WTC11 (cell line): ENCODE measurements at regions of chr1 and their contacts with region 1.

Region 1: DNA sequence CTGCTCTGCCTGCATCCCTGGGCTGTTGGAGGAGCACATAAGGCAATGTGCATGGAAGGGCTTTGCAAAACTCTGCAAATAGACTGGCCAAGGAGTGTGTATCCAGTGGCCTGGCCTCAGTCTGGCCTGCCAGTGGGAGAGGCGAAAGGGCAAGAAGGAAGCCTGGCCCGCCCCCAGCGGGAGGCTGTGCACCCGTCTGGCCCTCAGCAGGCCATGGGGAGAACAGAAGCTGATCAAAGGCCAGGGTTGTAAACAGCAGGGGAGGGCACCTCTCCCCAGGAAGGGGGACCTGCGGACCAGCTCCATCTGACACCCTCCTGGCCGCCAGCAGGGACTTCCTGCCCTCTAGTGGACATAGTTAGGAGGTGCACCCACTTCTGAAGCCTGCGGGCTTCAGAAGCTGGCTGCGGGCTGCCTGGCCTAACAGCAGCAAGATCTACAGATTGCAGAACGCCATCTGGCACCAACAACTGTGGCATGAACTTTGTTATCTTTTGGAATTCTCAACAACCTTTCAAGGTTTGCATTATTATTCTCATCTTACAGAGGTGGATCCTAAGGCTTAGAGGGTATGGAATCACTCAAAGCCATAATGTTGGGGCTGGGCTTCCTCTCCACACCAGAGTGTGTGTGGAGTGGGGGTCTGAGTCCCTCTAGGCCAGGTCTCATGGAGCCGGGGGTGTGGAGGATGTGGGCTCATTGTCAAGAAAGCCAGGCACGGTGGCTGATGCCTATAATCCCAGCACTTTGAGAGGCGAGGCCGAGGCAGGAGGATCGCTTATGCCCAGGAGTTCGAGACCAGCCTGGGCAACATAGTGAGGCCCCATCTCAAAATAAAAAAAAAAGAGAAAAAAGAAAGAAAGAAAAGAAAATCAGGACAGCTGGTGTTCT is 18.9 kb upstream of the CDK18 start:
- DNase-seq: peak; percentile 81
- ATAC-seq: peak; percentile 75
- H3K4me3 Mint-ChIP-seq: no peak overlapping the region
- H3K27ac Mint-ChIP-seq: no peak overlapping the region
- H3K4me1 Mint-ChIP-seq: peaks cover 33% of the 10 kb centered on the region
- H3K27me3 Mint-ChIP-seq: peaks cover 28% of the 10 kb centered on the region
- CTCF ChIP-seq: peak; percentile 98

Region 2: DNA sequence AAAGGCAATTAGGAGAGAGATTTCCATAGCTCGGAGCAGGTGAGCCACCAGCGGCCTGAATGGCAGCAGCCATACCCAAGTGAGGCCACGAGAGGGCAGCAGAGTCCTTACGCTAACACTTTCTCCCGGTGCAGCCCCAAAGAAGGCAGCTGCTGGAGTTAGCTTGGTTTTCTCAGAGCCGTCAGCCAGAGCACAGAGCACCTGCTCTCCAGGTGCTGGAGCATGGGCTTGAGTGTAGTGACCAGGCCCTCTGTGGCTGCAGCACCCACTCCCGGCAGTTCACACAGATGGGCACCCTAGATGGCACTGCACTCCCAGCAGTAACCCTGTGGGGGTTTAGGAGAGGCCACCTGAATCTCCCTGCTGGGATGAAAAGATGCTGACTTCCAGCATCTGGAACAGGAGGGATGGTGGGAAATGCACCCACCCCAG is 212.0 kb before region 1 on chr1:
- CTCF ChIA-PET with region 1: interaction called, 18 read pairs
- POLR2A ChIA-PET with region 1: no interaction called
- DNase-seq: peak; percentile 95
- ATAC-seq: peak; percentile 78
- H3K4me3 Mint-ChIP-seq: no peak overlapping the region
- H3K27ac Mint-ChIP-seq: peak overlapping the region; percentile 83
- H3K4me1 Mint-ChIP-seq: peaks cover 17% of the 10 kb centered on the region
- H3K27me3 Mint-ChIP-seq: no peaks in the 10 kb centered on the region
- CTCF ChIP-seq: peak; percentile 97

Region 3: GRCh38 chr1:205375835-205376545 is 109.6 kb before region 1 on chr1:
- CTCF ChIA-PET with region 1: interaction called, 13 read pairs
- POLR2A ChIA-PET with region 1: no interaction called
- DNase-seq: peak; percentile 30
- ATAC-seq: peak; percentile 90
- H3K4me3 Mint-ChIP-seq: peak overlapping the region; percentile 52
- H3K27ac Mint-ChIP-seq: peak overlapping the region; percentile 80
- H3K4me1 Mint-ChIP-seq: peaks cover 46% of the 10 kb centered on the region
- H3K27me3 Mint-ChIP-seq: no peaks in the 10 kb centered on the region
- CTCF ChIP-seq: no peak

Region 4: GRCh38 chr1:205422993-205423625 is 62.5 kb before region 1 on chr1:
- CTCF ChIA-PET with region 1: interaction called, 89 read pairs
- POLR2A ChIA-PET with region 1: interaction called, 3 read pairs
- DNase-seq: no peak
- ATAC-seq: no peak
- H3K4me3 Mint-ChIP-seq: no peak overlapping the region
- H3K27ac Mint-ChIP-seq: no peak overlapping the region
- H3K4me1 Mint-ChIP-seq: peaks cover 42% of the 10 kb centered on the region
- H3K27me3 Mint-ChIP-seq: peaks cover 37% of the 10 kb centered on the region
- CTCF ChIP-seq: no peak

Region 5: GRCh38 chr1:205458777-205459566 is 26.6 kb before region 1 on chr1:
- CTCF ChIA-PET with region 1: interaction called, 143 read pairs
- POLR2A ChIA-PET with region 1: interaction called, 13 read pairs
- DNase-seq: peak; percentile 79
- ATAC-seq: peak; percentile 16; the same call in 1 of the 2 replicates
- H3K4me3 Mint-ChIP-seq: no peak overlapping the region
- H3K27ac Mint-ChIP-seq: no peak overlapping the region
- H3K4me1 Mint-ChIP-seq: peaks cover 23% of the 10 kb centered on the region
- H3K27me3 Mint-ChIP-seq: peaks cover 4% of the 10 kb centered on the region
- CTCF ChIP-seq: no peak

Region 6: GRCh38 chr1:205528887-205529825 is 43.6 kb after region 1 on chr1:
- CTCF ChIA-PET with region 1: interaction called, 613 read pairs
- POLR2A ChIA-PET with region 1: interaction called, 8 read pairs
- DNase-seq: peak; percentile 94
- ATAC-seq: peak; percentile 84
- H3K4me3 Mint-ChIP-seq: no peak overlapping the region
- H3K27ac Mint-ChIP-seq: no peak overlapping the region
- H3K4me1 Mint-ChIP-seq: peaks cover 16% of the 10 kb centered on the region
- H3K27me3 Mint-ChIP-seq: no peaks in the 10 kb centered on the region
- CTCF ChIP-seq: peak; percentile 95

Region 7: DNA sequence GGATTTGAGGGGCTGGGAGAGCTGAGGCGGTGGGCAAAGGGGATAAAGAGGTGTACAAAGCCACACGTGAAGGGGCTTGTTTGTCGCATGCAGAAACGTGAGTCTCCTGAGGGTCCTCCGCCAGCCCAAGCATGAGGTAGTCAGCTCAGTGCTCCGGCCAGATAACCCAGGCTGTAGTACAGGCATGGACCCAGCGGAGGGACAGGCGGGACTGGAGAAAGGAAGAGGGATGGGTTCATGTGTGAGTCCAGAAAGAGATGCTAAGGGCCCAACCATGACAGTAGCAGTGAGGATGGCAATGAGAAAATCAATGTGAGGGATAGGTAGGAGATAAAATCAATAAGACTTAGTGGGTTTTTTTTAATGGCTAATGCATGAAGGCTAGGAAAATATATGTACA is 159.9 kb after region 1 on chr1:
- CTCF ChIA-PET with region 1: no interaction called
- POLR2A ChIA-PET with region 1: no interaction called
- DNase-seq: no peak
- ATAC-seq: peak; percentile 68
- H3K4me3 Mint-ChIP-seq: no peak overlapping the region
- H3K27ac Mint-ChIP-seq: 0 out of 2 replicates have a peak overlapping the region, but pooled peaks have one; percentile 30
- H3K4me1 Mint-ChIP-seq: peaks cover 24% of the 10 kb centered on the region
- H3K27me3 Mint-ChIP-seq: no peaks in the 10 kb centered on the region
- CTCF ChIP-seq: no peak